Activated naive CD4-positive, alpha-beta T cell treated with anti-CD3 and anti-CD28 coated beads for 36 hours (primary cell): ENCODE measurements at regions of chr1 and their contacts with region 1.

Region 1: DNA sequence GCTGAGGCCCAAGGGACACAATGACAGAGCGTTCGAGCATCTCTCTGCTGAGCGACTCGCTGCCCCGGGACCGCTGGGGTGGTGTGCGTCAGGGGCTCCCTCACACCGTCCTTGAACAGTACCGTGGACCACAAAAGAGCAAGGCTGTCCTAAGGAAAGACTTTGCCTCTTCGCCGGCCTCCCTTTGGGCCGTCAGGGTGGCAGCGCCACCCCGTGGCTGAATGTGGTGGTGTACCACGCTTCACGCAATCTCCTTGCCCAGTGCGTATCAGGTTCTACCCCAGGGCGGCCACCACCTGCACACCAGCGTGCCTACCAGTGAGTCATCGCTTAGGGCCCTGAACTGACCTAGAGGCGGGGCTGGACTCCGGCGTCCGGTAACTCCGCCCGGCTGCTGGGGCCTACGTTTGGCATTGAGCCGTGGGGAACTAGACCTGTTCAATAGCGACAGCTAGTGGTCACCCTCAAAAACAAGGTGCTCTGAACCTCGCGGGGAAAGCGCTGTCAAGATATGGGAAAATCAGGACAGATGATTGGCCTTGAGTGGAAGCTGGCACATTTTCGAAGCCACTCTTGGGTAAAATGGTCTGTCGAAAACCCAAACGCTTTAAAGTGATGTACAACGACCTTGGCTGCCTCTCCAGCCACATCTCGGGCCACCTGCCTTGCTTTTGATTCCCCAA is 8.1 kb upstream of the TRAF3IP3 start:
- DNase-seq: peak; percentile 92
- H3K4me3 Mint-ChIP-seq: peak overlapping the region; percentile 66
- H3K27ac Mint-ChIP-seq: peak overlapping the region; percentile 91
- H3K4me1 Mint-ChIP-seq: peaks cover 71% of the 10 kb centered on the region
- H3K27me3 Mint-ChIP-seq: no peaks in the 10 kb centered on the region

Region 2: GRCh38 chr1:209123601-209124000 is 624.1 kb before region 1 on chr1:
- CTCF ChIA-PET with region 1: no interaction called
- intact Hi-C with region 1: no loop called
- DNase-seq: no peak
- H3K4me3 Mint-ChIP-seq: no peak overlapping the region
- H3K27ac Mint-ChIP-seq: no peak overlapping the region
- H3K4me1 Mint-ChIP-seq: no peaks in the 10 kb centered on the region
- H3K27me3 Mint-ChIP-seq: peaks cover 15% of the 10 kb centered on the region

Region 3: DNA sequence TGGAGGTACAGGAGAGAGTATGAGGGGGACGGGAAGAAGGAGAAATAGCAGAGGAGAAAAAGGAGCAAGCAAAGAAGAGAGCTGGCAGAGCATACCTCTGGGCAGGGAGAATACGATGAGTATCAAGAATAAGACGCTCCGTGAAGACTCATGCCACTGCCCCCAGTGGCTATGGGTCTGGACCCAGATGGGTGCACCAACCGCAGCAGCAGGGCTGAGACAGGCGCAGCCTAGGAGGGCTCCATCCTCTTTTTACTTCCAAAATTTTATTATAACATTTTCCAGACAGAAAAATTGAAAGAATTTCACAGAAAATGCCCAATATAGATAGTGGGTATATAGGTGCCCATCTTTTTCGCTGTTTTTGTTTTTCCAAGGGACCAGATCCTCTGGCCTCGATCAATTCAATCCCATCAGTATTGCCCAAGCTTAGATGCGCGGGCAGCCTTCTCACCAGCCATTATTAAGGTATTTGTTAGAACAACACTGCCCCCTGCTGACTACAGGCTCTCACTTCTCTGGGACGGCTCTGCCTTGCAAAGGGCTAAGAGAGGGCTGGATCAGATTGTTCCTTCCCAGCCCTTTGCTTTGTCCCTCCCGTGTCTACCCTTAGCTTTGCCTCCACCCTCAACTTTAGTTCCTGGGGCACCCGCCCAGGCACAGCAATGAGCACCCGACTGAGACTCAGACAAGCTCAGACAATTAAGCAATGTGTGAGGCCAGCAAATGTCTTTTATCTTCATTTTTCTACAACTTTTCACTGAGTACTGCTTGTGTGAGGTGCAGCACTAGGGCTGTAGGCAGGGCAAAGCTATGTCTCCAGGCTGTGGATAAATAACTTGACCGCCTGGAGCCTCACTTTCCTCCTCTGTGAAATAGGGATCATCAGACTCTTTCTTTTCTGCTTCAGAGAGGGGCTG is 181.7 kb before region 1 on chr1:
- CTCF ChIA-PET with region 1: interaction called, 8 read pairs
- intact Hi-C with region 1: loop called (anchors 1 kb)
- DNase-seq: peak; percentile 92
- H3K4me3 Mint-ChIP-seq: no peak overlapping the region
- H3K27ac Mint-ChIP-seq: no peak overlapping the region
- H3K4me1 Mint-ChIP-seq: peaks cover 20% of the 10 kb centered on the region
- H3K27me3 Mint-ChIP-seq: peaks cover 13% of the 10 kb centered on the region

Region 4: GRCh38 chr1:209607102-209607794 is 140.5 kb before region 1 on chr1:
- CTCF ChIA-PET with region 1: interaction called, 22 read pairs
- intact Hi-C with region 1: loop called (anchors 1 kb)
- DNase-seq: peak; percentile 88
- H3K4me3 Mint-ChIP-seq: peak overlapping the region; percentile 51
- H3K27ac Mint-ChIP-seq: peak overlapping the region; percentile 86
- H3K4me1 Mint-ChIP-seq: peaks cover 11% of the 10 kb centered on the region
- H3K27me3 Mint-ChIP-seq: no peaks in the 10 kb centered on the region

Region 5: DNA sequence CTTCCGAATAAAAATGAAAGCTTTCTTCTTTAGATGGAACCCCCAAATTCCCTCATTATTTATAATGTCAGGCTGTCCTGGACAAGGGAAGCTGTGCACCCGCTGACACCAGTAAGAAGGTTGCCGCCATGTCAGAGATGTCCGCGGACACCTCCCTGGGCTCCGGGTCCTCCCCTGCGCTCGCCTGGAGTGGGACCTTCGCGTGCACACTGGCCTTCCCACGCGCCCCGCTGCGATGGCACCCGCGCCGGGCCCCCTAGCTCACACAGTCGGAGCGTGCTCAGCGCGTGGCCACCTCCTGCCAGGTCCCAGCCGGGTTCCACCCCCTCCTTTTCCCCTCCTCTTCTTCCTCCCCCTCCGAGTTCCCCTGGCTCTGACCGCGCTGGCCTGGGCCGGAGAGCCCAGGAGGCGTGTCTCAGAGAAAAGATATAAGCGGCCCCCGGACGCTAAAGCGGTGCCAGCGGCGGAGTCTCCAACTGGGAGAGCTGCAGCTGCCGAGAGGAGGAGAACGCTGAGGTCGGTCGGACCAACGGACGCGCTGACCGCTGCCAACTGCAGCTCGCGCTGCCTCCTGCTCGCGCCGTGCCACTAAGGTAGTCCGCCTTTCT is 72.7 kb before region 1 on chr1 and contains the start of gene G0S2:
- CTCF ChIA-PET with region 1: interaction called, 7 read pairs
- intact Hi-C with region 1: loop called (anchors 1 kb)
- DNase-seq: peak; percentile 68
- H3K4me3 Mint-ChIP-seq: peak within 1 kb of the TSS; percentile 87
- H3K27ac Mint-ChIP-seq: peak within 1 kb of the TSS; percentile 92
- H3K4me1 Mint-ChIP-seq: peaks cover 59% of the 10 kb centered on the region
- H3K27me3 Mint-ChIP-seq: peaks cover 19% of the 10 kb centered on the region
- total RNA-seq, gene G0S2: 138 to 139 TPM

Region 6: DNA sequence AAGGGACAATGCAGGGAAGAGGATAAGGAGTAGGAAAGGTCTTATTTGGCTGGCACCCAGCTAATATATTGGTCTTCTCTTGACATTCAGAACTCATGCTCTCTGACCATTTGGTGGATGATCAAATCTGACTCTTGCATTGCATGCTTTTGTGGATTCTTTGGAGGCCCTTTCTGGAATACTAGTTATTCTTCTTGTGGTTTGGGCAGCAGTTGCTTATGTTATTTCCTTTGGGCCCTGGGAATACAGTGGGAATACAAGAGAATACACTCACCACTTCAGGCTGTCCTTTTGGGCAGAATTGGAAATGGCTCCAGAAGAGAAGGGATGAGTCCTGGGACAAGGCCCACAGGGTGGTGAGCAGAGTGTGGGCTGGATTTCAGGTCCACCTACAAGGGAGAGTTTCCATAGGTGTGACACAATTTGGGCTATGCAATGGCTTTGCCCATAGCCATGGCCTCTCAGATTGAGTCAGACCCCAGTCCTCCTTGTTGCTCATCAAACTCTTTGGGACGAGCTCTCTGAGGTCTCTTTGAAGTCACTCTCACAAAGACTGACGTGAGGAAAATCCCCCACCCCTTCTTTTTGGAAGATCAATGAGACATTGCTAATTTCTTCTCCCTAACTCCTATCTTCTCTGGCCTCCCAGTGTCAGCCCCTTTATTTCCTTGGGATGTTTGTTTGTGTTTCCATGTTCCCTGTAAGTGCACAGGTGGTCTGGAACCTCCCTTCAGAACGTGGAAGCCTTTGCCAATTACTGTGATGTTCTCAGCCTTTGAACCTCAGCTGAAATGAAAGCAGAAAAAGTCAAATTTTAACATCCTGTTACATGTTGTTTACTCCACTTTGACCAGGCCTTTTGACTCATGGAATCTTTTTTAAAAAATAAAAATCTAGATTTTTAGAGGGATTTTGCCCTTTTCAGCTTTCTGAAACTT is 23.7 kb before region 1 on chr1:
- CTCF ChIA-PET with region 1: interaction called, 49 read pairs
- intact Hi-C with region 1: loop called (anchors 1 kb)
- DNase-seq: peak; percentile 80
- H3K4me3 Mint-ChIP-seq: peak overlapping the region; percentile 49
- H3K27ac Mint-ChIP-seq: peak overlapping the region; percentile 99
- H3K4me1 Mint-ChIP-seq: peaks cover 70% of the 10 kb centered on the region
- H3K27me3 Mint-ChIP-seq: no peaks in the 10 kb centered on the region

Region 7: GRCh38 chr1:209769171-209769904 is 21.6 kb after region 1 on chr1:
- CTCF ChIA-PET with region 1: interaction called, 77 read pairs
- intact Hi-C with region 1: loop called (anchors 1 kb)
- DNase-seq: peak; percentile 92
- H3K4me3 Mint-ChIP-seq: no peak overlapping the region
- H3K27ac Mint-ChIP-seq: no peak overlapping the region
- H3K4me1 Mint-ChIP-seq: peaks cover 10% of the 10 kb centered on the region
- H3K27me3 Mint-ChIP-seq: no peaks in the 10 kb centered on the region

Region 8: DNA sequence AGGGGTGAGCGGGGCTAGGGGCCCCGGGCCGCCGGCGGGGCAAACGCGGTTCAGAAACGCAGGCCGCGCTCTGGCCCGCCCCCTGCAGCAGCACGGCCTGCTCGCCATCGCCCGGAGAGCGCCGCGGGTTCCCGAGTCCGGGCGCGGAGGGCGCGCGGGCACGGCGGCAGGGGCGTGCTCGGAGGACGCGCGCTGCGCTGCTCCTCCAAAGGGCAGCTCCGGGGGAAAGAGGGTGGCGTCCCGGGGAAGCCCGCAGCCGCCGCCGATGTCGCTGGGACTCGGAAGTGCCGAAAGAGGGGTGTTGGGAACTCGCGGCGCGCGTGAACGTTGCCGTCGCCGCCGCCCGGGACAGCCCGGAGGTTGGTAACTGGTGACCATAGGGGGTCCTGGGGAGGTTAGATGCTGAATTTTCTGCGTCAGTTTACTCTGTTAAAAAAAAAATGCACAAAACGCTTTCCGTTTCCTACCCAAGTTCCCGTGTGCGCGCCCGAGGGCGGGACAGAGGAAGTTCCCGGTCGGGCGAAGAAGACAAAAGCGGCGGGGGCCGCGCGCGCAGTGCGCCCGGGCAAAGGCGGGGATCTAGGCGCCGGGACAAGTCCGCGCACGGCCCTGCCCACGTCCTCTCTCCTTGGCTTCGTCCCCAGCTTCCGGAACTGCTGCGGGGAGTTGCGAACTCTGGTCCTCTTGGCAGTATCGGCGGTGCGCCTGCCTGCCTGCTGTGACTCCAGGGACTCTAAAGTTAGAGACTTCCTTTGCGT is 581.2 kb after region 1 on chr1 and contains the start of gene HHAT:
- CTCF ChIA-PET with region 1: no interaction called
- intact Hi-C with region 1: loop called (anchors 1 kb)
- DNase-seq: peak; percentile 84
- H3K4me3 Mint-ChIP-seq: peak within 1 kb of the TSS; percentile 93
- H3K27ac Mint-ChIP-seq: peak within 1 kb of the TSS; percentile 95
- H3K4me1 Mint-ChIP-seq: peaks cover 41% of the 10 kb centered on the region
- H3K27me3 Mint-ChIP-seq: peaks cover 4% of the 10 kb centered on the region
- total RNA-seq, gene HHAT: 3.6 to 3.9 TPM